MCF 10A (cell line): ENCODE measurements at regions of chr15 and their contacts with region 1.

Region 1: DNA sequence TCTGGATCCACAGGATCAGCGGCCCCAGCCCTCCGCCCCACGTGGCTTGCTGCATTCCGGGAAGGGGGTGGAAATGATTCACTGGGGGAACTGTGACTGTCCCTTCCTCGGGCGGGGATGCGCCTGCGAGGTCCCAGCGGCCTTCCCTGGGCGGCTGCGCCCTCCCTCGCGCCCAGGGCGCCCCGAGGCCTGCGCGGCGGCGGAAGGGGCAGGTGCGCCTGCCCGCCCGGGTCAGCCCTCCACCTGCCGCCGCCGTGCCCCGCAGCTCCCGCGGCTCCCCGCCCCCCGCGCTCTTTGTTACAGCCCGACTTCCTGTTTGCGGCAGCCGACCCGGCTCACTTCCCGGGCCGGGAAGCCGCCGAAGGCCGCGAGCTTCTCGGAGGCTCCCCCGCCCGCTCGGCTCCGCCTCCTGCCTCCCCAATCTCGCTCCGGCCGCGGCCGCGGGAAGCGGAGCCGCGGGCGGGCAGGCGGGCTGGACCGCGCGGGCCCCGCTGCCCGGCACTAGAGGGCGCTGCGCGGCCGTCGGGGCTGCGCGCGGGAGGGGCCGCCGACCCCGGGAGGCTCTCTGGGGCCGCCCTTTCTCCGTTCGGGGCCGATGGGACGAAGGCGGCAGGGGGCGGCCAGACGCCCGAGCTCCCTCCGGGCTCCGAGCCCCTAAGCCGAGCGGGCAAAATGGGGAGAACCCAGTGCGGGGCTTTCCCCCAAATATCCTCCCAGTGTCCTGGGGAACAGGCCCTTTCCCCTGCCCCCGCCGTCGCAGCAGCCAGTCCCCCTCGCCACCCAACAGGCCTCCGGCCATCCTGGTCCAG is 11.5 kb upstream of the CHAC1 start:
- DNase-seq: peak; percentile 75
- H3K4me3 Mint-ChIP-seq: peak overlapping the region; percentile 63
- H3K27ac Mint-ChIP-seq: no peak overlapping the region
- H3K4me1 Mint-ChIP-seq: peaks cover 11% of the 10 kb centered on the region
- H3K27me3 Mint-ChIP-seq: no peaks in the 10 kb centered on the region
- CTCF ChIP-seq: peak; percentile 73

Region 2: GRCh38 chr15:40928821-40929659 is 12.7 kb before region 1 on chr15 and contains the start of gene DLL4:
- CTCF ChIA-PET with region 1: interaction called, 48 read pairs
- POLR2A ChIA-PET with region 1: interaction called, 7 read pairs
- intact Hi-C with region 1: no loop called
- DNase-seq: peak; percentile 57
- H3K4me3 Mint-ChIP-seq: peak within 1 kb of the TSS; percentile 72
- H3K27ac Mint-ChIP-seq: no peak within 1 kb of the TSS
- H3K4me1 Mint-ChIP-seq: peaks cover 13% of the 10 kb centered on the region
- H3K27me3 Mint-ChIP-seq: peaks cover 51% of the 10 kb centered on the region
- CTCF ChIP-seq: no peak
- total RNA-seq, gene DLL4: 0.10 TPM in 1 of 2 replicates, not detected in the other

Region 3: GRCh38 chr15:40974879-40975278 is 33.1 kb after region 1 on chr15:
- CTCF ChIA-PET with region 1: interaction called, 15 read pairs
- POLR2A ChIA-PET with region 1: no interaction called
- intact Hi-C with region 1: no loop called
- DNase-seq: no peak
- H3K4me3 Mint-ChIP-seq: no peak overlapping the region
- H3K27ac Mint-ChIP-seq: no peak overlapping the region
- H3K4me1 Mint-ChIP-seq: peaks cover 12% of the 10 kb centered on the region
- H3K27me3 Mint-ChIP-seq: no peaks in the 10 kb centered on the region
- CTCF ChIP-seq: no peak

Region 4: DNA sequence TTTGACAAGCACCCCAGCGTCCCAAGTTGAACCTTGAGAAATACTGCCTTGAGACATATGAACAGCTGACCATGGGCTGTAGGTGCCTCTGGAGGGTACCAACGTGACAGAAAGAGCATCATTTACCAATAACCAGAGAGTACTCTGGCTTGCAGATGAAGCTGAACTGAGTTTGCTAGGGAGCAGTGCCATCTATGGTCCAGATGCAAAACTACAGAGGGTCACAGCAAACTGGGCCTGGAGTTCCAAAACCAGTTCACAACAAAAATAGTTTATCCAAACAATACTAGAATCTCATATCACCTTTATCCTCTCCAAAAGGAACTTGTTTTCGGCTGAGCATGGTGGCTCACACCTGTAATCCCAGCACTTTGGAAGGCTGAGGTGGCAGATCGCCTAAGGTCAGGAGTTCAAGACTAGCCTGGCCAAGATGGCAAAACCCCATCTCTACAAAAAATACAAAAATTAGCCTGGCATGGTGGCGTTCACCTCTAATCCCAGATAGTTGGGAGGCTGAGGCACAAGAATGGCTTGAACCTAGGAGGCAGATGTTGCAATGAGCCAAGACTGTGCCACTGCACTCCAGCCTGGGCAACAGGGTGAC is 80.9 kb after region 1 on chr15:
- CTCF ChIA-PET with region 1: interaction called, 12 read pairs
- POLR2A ChIA-PET with region 1: no interaction called
- intact Hi-C with region 1: loop called (anchors 5 kb)
- DNase-seq: peak; percentile 48
- H3K4me3 Mint-ChIP-seq: no peak overlapping the region
- H3K27ac Mint-ChIP-seq: no peak overlapping the region
- H3K4me1 Mint-ChIP-seq: peaks cover 5% of the 10 kb centered on the region
- H3K27me3 Mint-ChIP-seq: no peaks in the 10 kb centered on the region
- CTCF ChIP-seq: peak; percentile 55

Region 5: GRCh38 chr15:41125931-41126642 is 184.4 kb after region 1 on chr15:
- CTCF ChIA-PET with region 1: no interaction called
- POLR2A ChIA-PET with region 1: no interaction called
- intact Hi-C with region 1: no loop called
- DNase-seq: no peak
- H3K4me3 Mint-ChIP-seq: no peak overlapping the region
- H3K27ac Mint-ChIP-seq: no peak overlapping the region
- H3K4me1 Mint-ChIP-seq: no peaks in the 10 kb centered on the region
- H3K27me3 Mint-ChIP-seq: no peaks in the 10 kb centered on the region
- CTCF ChIP-seq: no peak

Region 6: GRCh38 chr15:41180206-41180789 is 238.6 kb after region 1 on chr15:
- CTCF ChIA-PET with region 1: interaction called, 8 read pairs
- POLR2A ChIA-PET with region 1: no interaction called
- intact Hi-C with region 1: loop called (anchors 1 kb)
- DNase-seq: no peak
- H3K4me3 Mint-ChIP-seq: no peak overlapping the region
- H3K27ac Mint-ChIP-seq: no peak overlapping the region
- H3K4me1 Mint-ChIP-seq: no peaks in the 10 kb centered on the region
- H3K27me3 Mint-ChIP-seq: no peaks in the 10 kb centered on the region
- CTCF ChIP-seq: no peak